Stomach (tissue), 19 donors: ENCODE measurements at regions of chr3 and their contacts with region 1.

Region 1: GRCh38 chr3:148861277-148861869 is 3.7 kb upstream of the CPA3 start:
- DNase-seq: peak in 1 of 2 donors; percentile 68
- H3K4me3 ChIP-seq: no peak overlapping the region
- H3K27ac ChIP-seq: no peak overlapping the region
- H3K4me1 ChIP-seq: peaks cover 0 to 9% (median 2%) of the 10 kb centered on the region in 4 donors
- H3K27me3 ChIP-seq: peaks cover 0 to 7% (median 0%) of the 10 kb centered on the region in 3 donors
- CTCF ChIP-seq: peak in 4 of 7 experiments; percentile 71 to 79 (median 74)
- EP300 ChIP-seq: no peak
- POLR2A ChIP-seq: no peak

Region 2: DNA sequence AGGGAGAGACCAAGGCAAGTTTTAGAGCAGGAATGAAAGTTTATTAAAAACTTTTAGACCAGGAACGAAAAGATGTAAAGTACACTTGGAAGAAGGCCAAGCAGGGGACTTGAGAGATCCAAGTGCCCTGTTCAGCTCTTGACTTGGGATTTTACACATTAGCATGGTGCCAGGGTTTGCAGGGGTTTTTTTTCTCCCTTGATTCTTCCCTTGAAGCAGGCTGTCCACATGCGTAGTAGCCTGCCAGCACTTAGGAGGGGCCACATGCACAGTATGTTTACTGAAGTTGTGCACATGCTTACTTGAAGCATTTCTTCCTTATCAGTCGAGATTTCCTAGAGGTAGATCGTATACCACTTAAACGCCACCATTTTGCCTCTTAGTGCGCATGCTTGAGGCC is 441.1 kb before region 1 on chr3:
- intact Hi-C with region 1: no loop called
- DNase-seq: no peak
- H3K4me3 ChIP-seq: no peak overlapping the region
- H3K27ac ChIP-seq: no peak overlapping the region
- H3K4me1 ChIP-seq: no peaks in the 10 kb centered on the region
- H3K27me3 ChIP-seq: no peaks in the 10 kb centered on the region
- CTCF ChIP-seq: no peak
- EP300 ChIP-seq: no peak
- POLR2A ChIP-seq: no peak

Region 3: DNA sequence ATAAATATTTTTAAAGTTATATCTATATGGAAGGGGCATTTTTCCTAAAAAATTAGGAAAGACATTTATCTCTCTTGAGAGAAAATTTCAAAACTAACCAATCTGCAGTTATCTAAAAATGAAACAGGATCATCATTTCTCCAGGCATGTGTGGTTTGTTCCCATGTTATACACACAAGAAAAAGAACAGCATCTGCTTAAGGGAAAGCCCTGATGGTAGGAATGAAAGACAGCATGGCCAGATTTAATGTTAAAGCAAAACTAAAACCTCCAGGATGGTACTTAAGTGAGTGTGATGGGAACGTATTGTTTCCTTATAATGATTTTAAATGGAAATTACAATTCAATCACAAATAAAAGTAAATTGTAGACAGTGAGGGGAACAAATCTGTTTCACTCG is 83.7 kb after region 1 on chr3:
- intact Hi-C with region 1: loop called (anchors 5 kb)
- DNase-seq: no peak
- H3K4me3 ChIP-seq: no peak overlapping the region
- H3K27ac ChIP-seq: no peak overlapping the region
- H3K4me1 ChIP-seq: no peaks in the 10 kb centered on the region
- H3K27me3 ChIP-seq: no peaks in the 10 kb centered on the region
- CTCF ChIP-seq: no peak
- EP300 ChIP-seq: no peak
- POLR2A ChIP-seq: no peak